ENCODE measurements at regions of chr12 and their contacts with region 1.

Region 1: DNA sequence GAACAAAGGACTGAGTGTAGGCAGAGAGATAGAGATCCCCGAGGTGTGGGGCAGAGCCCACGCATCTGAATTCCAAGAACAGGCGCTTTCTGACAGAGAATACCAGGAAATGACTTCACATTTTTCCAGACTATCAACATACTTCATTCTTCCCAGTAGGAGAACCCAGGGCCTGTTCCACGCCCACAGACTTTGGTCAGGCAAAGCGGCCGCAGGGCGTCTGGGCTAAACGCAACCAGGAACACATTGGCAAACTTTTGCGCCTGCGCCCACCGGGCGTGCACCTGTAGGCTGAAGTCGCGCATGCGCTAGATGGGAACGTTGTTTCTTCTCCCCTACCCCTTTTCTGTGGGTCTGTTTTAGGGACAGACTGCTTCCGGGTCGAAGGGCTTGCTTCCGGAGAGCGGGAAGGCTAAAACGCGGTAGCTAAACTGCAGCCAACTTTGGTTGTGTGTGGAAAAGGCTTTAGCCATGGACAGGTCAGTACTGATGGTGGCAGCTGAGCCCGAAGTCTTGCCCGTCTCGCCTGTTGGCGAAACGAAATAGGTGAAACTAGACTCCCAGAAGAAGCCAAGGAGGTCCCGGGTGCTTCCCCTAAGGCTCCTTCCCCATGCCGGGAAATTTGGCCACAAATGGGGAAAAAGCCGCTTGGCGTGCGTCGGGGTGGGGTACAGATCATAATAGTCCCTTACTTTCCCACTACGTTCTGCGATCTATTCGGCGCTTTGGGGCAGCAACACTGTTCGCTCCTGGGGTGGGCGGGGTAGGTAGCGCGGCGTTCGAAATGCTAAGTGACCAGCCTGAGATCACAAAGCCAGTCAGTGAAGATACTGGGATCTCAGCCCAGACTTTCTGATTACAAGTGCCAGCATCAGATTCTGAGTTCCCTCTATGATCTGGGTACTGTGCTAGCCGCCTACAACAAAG is at the start of gene NUP107:
- DNase-seq: peak; percentile 98
- H3K4me3 Mint-ChIP-seq: peak within 1 kb of the TSS; percentile 98
- H3K27ac Mint-ChIP-seq: peak within 1 kb of the TSS; percentile 96
- H3K4me1 Mint-ChIP-seq: peaks cover 39% of the 10 kb centered on the region
- H3K27me3 Mint-ChIP-seq: no peaks in the 10 kb centered on the region
- total RNA-seq, gene NUP107: 126 to 135 TPM

Region 2: DNA sequence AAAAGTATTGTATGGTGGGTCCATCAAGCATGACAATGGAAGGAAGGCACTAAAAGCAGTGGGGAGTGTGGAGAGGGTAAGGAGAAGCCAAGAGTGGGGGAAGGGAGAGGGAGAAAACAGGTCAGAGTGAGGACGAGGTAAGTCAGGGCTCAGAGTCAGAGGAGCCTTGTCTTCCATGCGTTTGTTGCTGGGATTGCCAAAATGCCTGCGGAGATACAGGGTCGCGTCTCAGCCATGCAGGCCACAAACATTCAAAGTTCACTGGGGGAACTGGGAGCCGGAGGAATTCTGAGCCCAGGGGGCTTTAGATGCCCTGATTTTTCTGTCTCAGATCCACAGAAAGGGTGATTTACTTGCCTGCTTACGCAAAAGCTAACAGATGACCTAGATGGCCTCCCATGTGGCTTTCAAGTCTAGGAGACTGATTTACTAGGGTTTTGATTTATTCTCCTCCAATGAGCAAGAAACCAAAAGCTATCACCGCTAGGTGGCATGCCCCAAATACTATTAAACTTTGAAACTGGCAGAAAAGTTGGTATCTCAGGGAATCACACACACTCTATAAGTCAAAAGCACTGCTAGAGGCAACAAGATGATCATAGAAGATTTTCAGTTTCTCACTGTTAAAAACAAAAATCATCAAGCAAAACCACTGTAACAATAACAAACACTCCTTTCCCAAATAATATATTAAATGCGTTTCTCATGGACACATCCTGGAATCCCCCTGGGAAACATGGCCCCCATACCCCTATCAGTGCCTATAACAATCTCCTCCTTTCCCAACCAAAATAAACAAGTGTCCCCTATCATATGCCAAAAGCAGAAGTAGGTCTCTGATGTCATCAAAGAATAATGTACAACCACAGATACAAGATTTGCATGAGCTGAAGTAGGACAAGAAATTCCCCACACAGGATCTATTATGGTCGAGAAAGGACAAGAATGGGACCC is 328.0 kb before region 1 on chr12:
- CTCF ChIA-PET with region 1: interaction called, 5 read pairs
- intact Hi-C with region 1: loop called (anchors 1 kb)
- DNase-seq: peak; percentile 84
- H3K4me3 Mint-ChIP-seq: no peak overlapping the region
- H3K27ac Mint-ChIP-seq: peak overlapping the region; percentile 10
- H3K4me1 Mint-ChIP-seq: peaks cover 25% of the 10 kb centered on the region
- H3K27me3 Mint-ChIP-seq: no peaks in the 10 kb centered on the region

Region 3: GRCh38 chr12:68641138-68641537 is 45.7 kb before region 1 on chr12:
- CTCF ChIA-PET with region 1: no interaction called
- intact Hi-C with region 1: loop called (anchors 2 kb)
- DNase-seq: peak; percentile 75
- H3K4me3 Mint-ChIP-seq: peak overlapping the region; percentile 21
- H3K27ac Mint-ChIP-seq: peak overlapping the region; percentile 50
- H3K4me1 Mint-ChIP-seq: peaks cover 88% of the 10 kb centered on the region
- H3K27me3 Mint-ChIP-seq: no peaks in the 10 kb centered on the region

Region 4: DNA sequence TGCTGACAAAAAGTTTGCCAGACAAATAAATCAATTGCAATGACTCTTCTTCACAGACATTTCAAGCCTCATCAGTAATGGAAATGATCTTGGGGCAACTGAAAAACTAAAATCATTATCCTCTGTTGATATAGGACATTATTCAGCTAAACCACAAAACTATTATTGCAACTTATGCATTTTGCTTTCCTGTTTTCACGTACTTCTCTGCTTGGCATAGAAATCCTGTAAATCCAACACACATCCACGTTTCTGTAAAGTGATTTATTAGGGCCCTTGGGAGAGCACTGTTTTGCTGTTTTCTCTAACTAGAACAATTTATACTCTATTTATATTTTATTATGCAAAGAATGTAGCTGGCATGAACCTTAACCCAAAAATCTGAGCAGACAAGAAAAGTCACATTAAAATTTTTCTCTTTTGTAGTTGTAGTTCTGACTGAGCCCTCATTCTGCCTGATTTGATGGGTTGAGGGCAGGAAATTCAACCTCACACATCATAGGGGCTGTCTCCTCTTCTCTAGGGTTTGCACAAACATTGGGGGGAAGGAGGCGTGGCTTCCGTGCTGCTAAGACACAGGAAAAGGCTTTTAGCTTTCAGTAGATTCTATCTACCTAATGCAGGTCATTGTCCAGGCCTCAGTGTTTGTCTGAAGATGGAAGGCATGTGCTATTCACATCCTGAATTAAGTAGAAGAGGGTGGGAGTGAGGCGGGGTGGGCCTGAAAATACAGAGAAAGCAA is 11.6 kb before region 1 on chr12:
- CTCF ChIA-PET with region 1: interaction called, 4 read pairs
- intact Hi-C with region 1: loop called (anchors 1 kb)
- DNase-seq: peak; percentile 85
- H3K4me3 Mint-ChIP-seq: peak overlapping the region; percentile 29
- H3K27ac Mint-ChIP-seq: peak overlapping the region; percentile 85
- H3K4me1 Mint-ChIP-seq: peaks cover 52% of the 10 kb centered on the region
- H3K27me3 Mint-ChIP-seq: no peaks in the 10 kb centered on the region

Region 5: DNA sequence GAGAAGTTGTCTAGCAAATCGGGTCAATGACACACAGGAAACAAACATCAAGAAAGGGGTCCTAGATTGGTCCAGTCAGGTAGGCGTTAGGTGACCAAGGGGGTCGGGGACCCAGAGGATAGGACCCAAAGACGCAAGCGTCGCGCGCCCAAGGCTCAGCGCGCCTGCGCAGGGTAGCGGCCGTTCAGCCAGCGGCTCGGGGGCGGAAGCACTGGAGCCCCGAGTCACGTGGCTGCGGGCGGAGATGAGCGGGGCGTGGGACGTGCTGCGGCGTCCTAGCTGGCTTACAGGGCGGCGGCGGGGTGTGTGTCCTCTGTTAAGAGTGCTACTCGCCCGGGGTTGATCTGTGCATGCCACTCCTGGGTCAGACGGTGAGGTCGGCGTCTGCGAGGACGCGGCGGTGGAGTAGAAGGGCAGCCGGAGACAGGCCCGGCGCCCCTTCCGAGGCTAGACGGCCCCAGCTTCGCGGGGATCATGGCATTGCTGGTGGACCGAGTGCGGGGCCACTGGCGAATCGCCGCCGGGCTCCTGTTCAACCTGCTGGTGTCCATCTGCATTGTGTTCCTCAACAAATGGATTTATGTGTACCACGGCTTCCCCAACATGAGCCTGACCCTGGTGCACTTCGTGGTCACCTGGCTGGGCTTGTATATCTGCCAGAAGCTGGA is 59.2 kb after region 1 on chr12 and contains the start of gene SLC35E3:
- CTCF ChIA-PET with region 1: no interaction called
- intact Hi-C with region 1: loop called (anchors 1 kb)
- DNase-seq: peak; percentile 93
- H3K4me3 Mint-ChIP-seq: peak within 1 kb of the TSS; percentile 95
- H3K27ac Mint-ChIP-seq: peak within 1 kb of the TSS; percentile 74
- H3K4me1 Mint-ChIP-seq: peaks cover 22% of the 10 kb centered on the region
- H3K27me3 Mint-ChIP-seq: no peaks in the 10 kb centered on the region
- total RNA-seq, gene SLC35E3: 2.8 to 3.1 TPM

Region 6: DNA sequence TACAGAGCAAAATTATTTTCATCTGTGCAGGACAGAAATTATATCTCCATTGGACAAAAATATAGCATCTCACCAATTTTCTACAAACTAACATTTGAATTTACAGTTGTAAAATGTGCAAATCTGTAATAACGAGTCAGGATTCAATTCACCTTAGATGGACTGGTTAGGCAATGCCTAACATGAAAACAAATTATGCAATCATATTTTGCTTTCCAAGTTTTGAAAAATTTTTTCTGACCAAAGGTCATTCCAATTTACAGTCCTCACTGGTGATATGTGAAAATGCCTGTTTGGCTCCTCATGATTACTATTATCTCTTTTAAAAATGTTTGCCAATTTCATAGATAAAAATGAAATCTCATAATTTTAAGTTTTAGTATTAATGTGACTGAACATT is 252.6 kb after region 1 on chr12:
- CTCF ChIA-PET with region 1: no interaction called
- intact Hi-C with region 1: no loop called
- DNase-seq: no peak
- H3K4me3 Mint-ChIP-seq: no peak overlapping the region
- H3K27ac Mint-ChIP-seq: no peak overlapping the region
- H3K4me1 Mint-ChIP-seq: no peaks in the 10 kb centered on the region
- H3K27me3 Mint-ChIP-seq: peaks cover 20% of the 10 kb centered on the region

Region 7: DNA sequence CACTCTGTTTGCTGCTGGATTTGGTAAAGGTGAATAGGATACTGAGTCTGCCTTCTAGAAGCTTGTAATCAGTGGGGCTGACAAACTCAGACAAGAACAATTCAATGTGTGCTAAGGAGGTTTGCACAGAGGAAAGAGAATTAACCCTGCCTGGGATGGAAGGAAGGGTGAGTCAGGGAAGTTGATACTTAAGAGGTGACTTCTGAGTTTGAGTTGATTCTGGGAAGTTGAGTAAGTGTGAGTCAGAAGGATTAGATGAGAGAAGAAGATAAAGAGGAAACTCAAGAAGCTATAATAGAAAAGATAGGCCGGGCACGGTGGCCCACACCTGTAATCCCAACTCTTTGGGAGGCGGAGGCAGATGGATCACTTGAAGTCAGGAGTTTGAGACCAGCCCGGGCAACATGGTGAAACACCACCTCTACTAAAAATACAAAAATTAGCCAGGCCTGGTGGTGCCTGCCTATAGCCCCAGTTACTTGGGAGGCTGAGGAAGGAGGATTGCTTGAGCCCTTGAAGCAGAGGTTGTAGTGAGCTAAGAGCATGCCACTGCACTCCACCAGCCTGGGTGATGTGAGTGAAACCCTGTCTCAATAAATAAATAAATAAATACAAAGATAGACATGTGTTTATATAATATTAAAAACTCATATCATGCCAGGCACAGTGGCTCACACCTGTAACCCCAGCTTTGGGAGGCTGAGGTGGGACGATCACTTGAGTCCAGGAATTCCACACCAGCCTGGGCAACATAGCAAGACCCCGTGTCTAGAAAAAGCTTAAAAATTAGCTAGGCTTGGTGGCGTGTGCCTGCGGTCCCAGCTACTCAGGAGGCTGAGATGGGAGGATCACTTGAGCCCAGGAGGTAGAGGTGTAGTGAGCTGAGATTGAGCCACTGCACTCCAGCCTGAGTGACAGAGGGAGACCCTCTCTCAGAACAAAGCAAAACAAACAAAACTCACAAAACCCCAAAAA is 372.9 kb after region 1 on chr12:
- CTCF ChIA-PET with region 1: no interaction called
- intact Hi-C with region 1: no loop called
- DNase-seq: peak; percentile 37
- H3K4me3 Mint-ChIP-seq: no peak overlapping the region
- H3K27ac Mint-ChIP-seq: peak overlapping the region; percentile 81
- H3K4me1 Mint-ChIP-seq: peaks cover 49% of the 10 kb centered on the region
- H3K27me3 Mint-ChIP-seq: no peaks in the 10 kb centered on the region